B cell (primary cell): ENCODE measurements at regions of chr14 and their contacts with region 1.

Region 1: DNA sequence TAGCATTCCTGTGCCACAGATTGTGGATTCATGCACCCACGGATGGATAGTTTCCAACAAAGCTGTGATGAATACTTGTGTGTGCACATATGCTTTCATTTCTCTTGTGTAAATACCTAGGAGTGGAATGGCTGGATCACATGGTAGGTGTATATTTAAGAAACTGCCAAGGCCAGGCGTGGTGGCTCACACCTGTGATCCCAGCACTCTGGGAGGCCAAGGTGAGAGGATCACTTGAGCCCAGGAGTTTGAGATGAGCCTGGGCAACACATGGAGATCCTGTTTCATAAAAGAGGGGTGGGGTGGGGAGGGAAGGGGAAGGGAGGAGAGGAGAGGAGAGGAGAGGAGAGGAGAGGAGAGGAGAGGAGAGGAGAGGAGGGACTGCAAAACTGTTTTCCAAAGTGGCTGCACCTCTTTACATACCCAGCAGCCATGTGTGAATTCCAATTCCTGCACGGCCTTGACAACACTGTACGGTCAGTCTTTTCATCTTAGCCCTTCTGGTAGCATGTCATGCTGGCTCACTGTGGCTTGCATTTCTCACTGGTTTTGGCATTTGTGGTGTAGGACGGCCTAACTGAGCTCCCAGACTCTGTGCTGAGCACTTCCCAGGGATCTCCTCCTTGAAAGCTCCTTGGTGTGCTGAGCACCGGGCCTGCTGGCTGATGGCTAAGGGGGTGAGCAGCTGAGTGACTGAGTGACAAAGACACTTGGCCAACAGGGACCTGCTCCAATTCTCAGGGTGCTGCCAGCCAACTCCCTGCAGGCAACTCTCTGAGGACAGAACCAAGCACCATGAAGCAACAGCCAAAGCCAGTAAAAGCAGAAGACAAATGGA is 27.9 kb downstream of the SYNE3 start:
- DNase-seq: no peak
- ATAC-seq: no peak
- H3K4me3 ChIP-seq: no peak overlapping the region
- H3K4me3 Mint-ChIP-seq: peak overlapping the region; percentile 26
- H3K27ac ChIP-seq: peak overlapping the region in 1 of 2 donors; percentile 9
- H3K27ac Mint-ChIP-seq: peak overlapping the region; percentile 86
- H3K4me1 ChIP-seq: peaks cover 70 to 79% of the 10 kb centered on the region in 2 donors
- H3K4me1 Mint-ChIP-seq: peaks cover 86% of the 10 kb centered on the region
- H3K27me3 ChIP-seq: no peaks in the 10 kb centered on the region
- H3K27me3 Mint-ChIP-seq: no peaks in the 10 kb centered on the region
- CTCF ChIP-seq: no peak

Region 2: GRCh38 chr14:95248432-95248831 is 240.2 kb before region 1 on chr14:
- CTCF ChIA-PET with region 1: no interaction called
- POLR2A ChIA-PET with region 1: no interaction called
- intact Hi-C with region 1: no loop called
- DNase-seq: no peak
- ATAC-seq: no peak
- H3K4me3 ChIP-seq: no peak overlapping the region
- H3K4me3 Mint-ChIP-seq: no peak overlapping the region
- H3K27ac ChIP-seq: no peak overlapping the region
- H3K27ac Mint-ChIP-seq: no peak overlapping the region
- H3K4me1 ChIP-seq: no peaks in the 10 kb centered on the region
- H3K4me1 Mint-ChIP-seq: peaks cover 6% of the 10 kb centered on the region
- H3K27me3 ChIP-seq: no peaks in the 10 kb centered on the region
- H3K27me3 Mint-ChIP-seq: no peaks in the 10 kb centered on the region
- CTCF ChIP-seq: no peak

Region 3: DNA sequence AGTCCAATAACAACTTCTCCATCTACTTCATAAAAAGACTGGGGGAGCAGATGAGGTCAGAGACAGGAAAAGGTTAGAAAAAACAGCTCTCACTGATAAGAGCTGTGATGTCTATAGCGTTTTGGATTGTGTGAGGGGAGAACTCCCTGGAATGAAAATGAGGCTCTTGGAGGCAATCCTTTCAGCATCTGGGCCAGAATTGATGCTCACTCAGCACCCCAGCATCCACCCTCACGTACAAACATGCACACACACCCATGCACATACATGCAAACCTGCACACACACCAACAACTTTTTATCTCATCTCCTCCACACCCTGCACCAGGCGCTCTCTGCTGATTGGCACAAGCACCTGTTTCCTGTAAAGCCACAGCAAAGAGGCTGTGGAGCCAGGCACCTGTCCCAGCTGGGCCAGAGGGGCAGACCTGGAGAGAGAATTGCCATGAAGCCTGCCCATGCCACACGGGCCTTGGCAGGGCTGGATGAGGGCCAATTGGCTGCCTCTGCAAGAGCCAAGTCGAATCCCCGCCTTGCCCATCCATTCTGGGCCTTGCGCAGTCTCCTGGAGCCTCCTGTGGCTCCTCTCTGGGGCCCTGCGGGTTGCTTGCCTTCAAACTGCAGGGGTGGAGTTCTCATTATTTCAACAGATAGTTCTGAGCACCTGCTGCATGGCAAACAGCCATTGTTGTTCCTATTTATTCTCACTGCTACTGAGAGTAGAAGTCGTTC is 25.3 kb before region 1 on chr14:
- CTCF ChIA-PET with region 1: interaction called, 5 read pairs
- POLR2A ChIA-PET with region 1: no interaction called
- intact Hi-C with region 1: loop called (anchors 1 kb)
- DNase-seq: peak; percentile 68
- ATAC-seq: peak; percentile 58
- H3K4me3 ChIP-seq: peak overlapping the region in 1 of 5 experiments; percentile 19
- H3K4me3 Mint-ChIP-seq: peak overlapping the region; percentile 69
- H3K27ac ChIP-seq: peak overlapping the region; percentile 48 to 95
- H3K27ac Mint-ChIP-seq: peak overlapping the region; percentile 87
- H3K4me1 ChIP-seq: peaks cover 53 to 54% of the 10 kb centered on the region in 2 donors
- H3K4me1 Mint-ChIP-seq: peaks cover 44% of the 10 kb centered on the region
- H3K27me3 ChIP-seq: no peaks in the 10 kb centered on the region
- H3K27me3 Mint-ChIP-seq: no peaks in the 10 kb centered on the region
- CTCF ChIP-seq: no peak

Region 4: GRCh38 chr14:95533391-95534221 is 45.0 kb after region 1 on chr14:
- CTCF ChIA-PET with region 1: no interaction called
- POLR2A ChIA-PET with region 1: no interaction called
- intact Hi-C with region 1: no loop called
- DNase-seq: peak; percentile 59
- ATAC-seq: no peak
- H3K4me3 ChIP-seq: peak overlapping the region; percentile 53 to 90 (median 79)
- H3K4me3 Mint-ChIP-seq: peak overlapping the region; percentile 93
- H3K27ac ChIP-seq: peak overlapping the region; percentile 72 to 93
- H3K27ac Mint-ChIP-seq: peak overlapping the region; percentile 93
- H3K4me1 ChIP-seq: peaks cover 23 to 36% of the 10 kb centered on the region in 2 donors
- H3K4me1 Mint-ChIP-seq: peaks cover 55% of the 10 kb centered on the region
- H3K27me3 ChIP-seq: no peaks in the 10 kb centered on the region
- H3K27me3 Mint-ChIP-seq: no peaks in the 10 kb centered on the region
- CTCF ChIP-seq: no peak